Astrocyte of the cerebellum (primary cell): ENCODE measurements at regions of chr9 and their contacts with region 1.

Region 1: DNA sequence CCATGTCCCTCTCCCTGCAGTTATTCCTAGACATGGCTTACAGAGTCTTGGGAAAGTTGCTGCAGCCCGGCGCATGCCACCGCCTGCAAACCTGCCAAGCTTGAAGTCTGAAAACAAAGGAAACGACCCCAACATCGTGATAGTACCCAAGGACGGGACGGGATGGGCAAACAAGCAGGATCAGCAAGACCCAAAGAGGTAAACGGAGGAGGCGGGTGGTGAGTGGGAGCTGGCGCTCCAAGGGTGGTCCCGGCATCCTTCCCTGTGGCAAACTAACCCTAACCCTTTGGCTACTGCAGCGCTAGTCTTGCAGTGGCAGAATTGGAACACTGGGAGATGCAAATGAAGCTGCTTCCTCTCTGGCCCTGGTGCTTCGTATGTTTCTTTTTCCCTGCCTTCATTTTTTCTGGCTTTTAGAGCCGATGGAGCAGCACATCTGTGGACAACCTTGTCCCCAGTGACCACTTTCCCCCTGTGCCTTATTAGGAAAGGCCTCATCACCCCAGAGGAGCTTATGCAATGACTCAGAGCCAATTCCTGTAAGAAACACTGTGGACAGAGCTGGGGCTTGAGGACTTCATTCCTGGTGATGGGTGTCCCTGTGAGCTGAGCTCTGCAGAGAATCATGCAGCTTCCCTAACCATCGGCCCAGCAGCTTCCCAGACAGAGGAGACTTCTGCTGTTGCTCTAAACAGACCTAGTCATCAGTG is 38.9 kb downstream of the PRRC2B start:
- DNase-seq: peak; percentile 13
- H3K4me3 ChIP-seq: no peak overlapping the region
- CTCF ChIP-seq: no peak

Region 2: GRCh38 chr9:131125128-131126058 is 307.4 kb before region 1 on chr9 and contains the start of gene NUP214:
- in situ Hi-C with region 1: loop called (anchors 25 kb)
- DNase-seq: peak; percentile 94
- H3K4me3 ChIP-seq: peak within 1 kb of the TSS; percentile 96
- CTCF ChIP-seq: no peak

Region 3: DNA sequence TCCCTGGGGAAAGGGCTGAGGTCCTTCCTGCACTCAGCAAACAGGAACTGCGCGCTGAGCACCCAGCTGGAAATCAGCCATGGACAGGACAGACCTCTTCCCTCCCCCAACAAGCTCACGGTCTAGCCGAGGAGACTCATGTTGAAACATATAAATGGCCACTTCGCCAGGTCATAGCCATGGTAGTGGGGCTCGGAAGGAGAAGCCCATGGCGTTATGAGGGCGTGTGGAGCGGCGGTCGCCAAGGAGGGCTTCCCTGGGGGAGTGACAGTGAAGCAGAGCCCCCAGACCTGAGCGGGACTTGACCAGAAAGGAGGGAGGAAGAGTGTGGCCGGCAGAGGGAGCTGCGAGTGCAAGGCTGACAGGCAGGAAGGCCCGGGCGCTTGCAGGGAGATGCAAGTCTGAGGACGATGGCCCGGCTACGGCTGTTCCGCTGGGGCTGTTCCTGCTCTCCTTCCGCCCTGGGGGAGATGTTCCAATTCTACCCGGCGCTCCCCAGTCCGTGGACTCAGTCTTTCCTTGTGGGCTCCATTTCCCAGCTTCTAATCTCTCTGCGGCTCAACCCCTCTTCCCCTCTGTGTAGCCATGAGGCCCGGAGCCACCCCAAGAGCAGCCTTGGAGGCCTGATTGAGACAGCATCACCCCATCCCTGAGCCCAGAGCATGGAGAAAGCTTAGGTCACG is 82.7 kb before region 1 on chr9:
- in situ Hi-C with region 1: loop called (anchors 5 kb)
- DNase-seq: peak; percentile 64
- H3K4me3 ChIP-seq: peak overlapping the region; percentile 19
- CTCF ChIP-seq: peak; percentile 86

Region 4: GRCh38 chr9:131366761-131367401 is 65.9 kb before region 1 on chr9:
- in situ Hi-C with region 1: no loop called
- DNase-seq: peak; percentile 77
- H3K4me3 ChIP-seq: no peak overlapping the region
- CTCF ChIP-seq: peak; percentile 60